OCI-LY7 (cell line): ENCODE measurements at regions of chr11 and their contacts with region 1.

Region 1: DNA sequence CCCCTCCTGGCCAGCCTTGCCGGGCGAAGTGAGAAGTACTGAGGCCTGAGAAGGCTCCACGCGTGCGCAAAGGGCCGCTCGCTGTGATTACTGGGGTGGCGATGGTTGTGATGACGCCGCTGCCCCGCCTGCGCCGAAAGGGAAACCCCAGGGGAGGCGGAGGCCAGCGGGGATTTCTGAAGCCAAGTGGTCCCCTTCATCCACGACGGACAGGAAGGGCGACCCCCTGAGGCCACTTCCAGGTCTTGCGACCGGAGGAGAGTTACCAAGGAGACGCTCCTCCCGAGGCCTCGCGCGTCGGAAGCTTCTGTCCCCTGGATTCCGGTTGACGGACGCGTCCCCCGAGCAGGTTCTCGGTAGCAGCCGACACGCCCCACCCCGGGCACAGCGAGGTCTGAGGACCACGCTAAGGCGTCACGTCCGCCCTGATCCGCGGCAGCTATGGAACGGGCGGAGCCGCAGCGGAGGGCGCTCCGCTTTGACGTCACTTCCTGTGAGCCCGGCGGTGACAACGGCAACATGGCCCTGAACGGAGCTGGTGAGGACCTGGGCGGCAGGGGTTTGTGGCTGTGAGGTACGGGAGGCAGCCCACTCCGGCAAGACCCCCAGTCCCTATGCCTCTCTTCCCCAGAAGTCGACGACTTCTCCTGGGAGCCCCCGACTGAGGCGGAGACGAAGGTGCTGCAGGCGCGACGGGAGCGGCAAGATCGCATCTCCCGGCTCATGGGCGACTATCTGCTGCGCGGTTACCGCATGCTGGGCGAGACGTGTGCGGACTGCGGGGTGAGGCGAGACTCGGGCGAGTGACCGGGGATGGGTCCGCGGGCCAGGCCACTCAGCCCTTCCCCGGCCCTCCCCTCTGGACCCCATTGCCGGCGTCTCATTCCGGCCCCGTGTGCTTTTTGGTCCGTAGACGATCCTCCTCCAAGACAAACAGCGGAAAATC is at the start of gene ZNRD2:
- DNase-seq: peak; percentile 99
- H3K4me3 ChIP-seq: peak within 1 kb of the TSS; percentile 94
- H3K27ac ChIP-seq: peak within 1 kb of the TSS; percentile 71
- H3K4me1 ChIP-seq: peaks cover 62% of the 10 kb centered on the region
- CTCF ChIP-seq: peak; percentile 69
- total RNA-seq, gene ZNRD2: 37.7 and 60.4 TPM in 2 replicates

Region 2: DNA sequence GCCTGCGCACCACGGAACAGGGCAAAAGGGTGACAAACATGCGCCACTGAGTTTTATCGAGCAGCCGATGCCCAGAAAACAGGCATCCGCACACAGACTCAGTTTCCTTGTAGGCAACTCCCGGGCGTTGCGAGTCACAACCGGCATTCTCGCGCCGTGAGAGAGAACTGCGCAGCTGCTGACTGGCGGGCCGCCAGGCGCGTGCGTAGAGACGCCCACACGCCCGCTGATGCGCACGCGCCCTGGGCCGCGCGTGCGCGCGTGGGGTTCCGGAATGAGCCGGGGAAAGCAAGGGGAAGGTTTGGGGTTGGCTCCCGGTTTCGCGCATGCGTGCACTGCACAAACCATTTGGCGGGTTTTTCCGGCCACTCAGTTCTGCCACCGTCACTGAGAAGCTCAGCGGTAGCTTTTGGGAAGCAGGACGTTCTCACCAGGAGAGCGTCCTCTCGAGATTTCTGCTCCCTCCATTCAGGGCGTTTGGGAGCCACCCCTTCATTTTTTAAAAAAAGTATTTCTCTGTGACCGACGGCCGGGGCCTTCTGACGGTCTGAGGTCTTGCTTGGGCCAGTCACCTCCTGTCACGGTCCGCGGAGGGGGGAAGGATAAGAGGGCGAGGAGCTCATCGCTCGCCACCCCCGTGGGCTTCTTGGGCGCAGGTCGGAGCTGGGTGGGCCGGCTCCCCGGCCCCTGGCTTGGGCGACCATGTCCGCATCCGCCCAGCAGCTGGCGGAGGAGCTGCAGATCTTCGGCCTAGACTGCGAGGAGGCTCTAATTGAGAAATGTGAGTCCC is 308.5 kb before region 1 on chr11 and contains the start of gene POLA2:
- CTCF ChIA-PET with region 1: no interaction called
- POLR2A ChIA-PET with region 1: no interaction called
- intact Hi-C with region 1: no loop called
- DNase-seq: peak; percentile 98
- H3K4me3 ChIP-seq: peak within 1 kb of the TSS; percentile 78
- H3K27ac ChIP-seq: peak within 1 kb of the TSS; percentile 70
- H3K4me1 ChIP-seq: peaks cover 25% of the 10 kb centered on the region
- CTCF ChIP-seq: no peak
- total RNA-seq, gene POLA2: 47.5 and 50.0 TPM in 2 replicates

Region 3: DNA sequence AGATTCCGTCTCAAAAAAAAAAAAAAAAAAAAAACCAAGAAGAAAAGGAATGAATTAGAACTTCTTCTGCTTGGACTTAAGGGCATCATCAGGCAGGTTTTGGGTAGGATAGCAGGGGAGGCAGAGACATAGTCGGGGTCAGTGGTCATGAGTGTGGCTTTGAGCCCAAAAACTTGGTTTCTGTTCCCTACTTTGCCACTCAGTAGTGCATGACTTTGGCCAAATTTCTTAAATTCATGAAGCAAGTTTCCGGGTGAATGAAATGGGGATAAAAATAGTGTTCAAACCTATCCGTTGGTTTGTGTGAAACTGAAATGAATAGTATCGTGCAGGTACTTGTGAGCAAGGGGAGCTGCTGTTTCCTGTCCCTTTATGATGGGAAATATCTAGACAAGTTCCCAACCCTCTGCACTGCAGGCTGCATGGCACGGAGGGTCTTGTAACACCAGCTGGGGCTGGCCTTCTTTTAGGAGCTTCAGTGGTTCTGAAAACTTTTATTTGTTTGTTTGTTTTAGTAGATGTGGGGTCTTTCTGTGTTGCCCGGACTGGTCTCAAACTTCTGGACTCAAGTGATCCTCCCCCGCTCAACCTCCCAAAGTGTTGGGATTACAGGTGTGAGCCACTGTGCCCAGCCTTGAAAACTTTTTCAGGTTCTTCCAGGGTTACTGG is 129.3 kb before region 1 on chr11:
- CTCF ChIA-PET with region 1: no interaction called
- POLR2A ChIA-PET with region 1: no interaction called
- intact Hi-C with region 1: no loop called
- DNase-seq: peak; percentile 91
- H3K4me3 ChIP-seq: peak overlapping the region; percentile 53
- H3K27ac ChIP-seq: peak overlapping the region; percentile 93
- H3K4me1 ChIP-seq: peaks cover 85% of the 10 kb centered on the region
- CTCF ChIP-seq: no peak

Region 4: DNA sequence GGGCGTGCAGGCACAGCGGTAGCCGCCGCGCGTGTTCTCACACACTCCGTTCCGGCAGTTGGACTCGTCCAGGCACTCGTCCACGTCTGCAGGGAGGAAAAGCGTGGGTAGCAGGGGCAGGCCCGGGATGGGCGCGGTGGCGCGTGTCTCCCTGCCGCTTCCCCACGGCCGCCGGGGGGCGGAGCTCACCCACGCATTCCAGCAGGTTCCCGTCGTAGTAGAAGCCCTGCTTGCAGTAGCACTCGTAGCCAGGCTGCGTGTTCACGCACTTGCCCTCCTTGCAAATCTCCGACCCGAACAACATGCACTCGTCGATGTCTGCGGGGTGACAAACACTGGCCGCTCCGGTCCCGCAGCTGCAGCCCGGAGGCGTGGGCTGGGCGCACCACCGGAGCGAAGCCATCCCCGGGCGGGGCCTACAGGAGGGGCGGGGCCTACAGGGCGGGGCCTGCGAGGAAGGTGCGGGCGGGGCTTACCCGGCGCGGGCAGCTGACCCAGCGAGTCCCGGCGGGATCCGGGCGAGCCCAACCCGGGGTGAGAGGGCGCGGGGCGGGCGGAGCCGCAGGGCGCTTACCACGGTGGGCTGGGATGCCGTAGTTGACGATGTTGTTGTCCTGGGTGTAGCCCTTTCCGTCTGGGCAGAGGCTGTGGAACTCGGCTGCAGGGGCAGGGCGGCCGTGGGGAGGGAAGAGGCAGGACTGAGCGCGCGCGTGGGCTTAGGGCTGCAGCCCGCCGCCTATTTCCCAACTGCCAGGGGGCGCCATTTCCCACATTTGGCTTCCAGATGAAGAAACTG is 29.8 kb before region 1 on chr11:
- CTCF ChIA-PET with region 1: interaction called, 3 read pairs
- POLR2A ChIA-PET with region 1: interaction called, 4 read pairs
- intact Hi-C with region 1: loop called (anchors 1 kb)
- DNase-seq: peak; percentile 92
- H3K4me3 ChIP-seq: peak overlapping the region; percentile 71
- H3K27ac ChIP-seq: peak overlapping the region; percentile 61
- H3K4me1 ChIP-seq: peaks cover 23% of the 10 kb centered on the region
- CTCF ChIP-seq: peak; percentile 90

Region 5: DNA sequence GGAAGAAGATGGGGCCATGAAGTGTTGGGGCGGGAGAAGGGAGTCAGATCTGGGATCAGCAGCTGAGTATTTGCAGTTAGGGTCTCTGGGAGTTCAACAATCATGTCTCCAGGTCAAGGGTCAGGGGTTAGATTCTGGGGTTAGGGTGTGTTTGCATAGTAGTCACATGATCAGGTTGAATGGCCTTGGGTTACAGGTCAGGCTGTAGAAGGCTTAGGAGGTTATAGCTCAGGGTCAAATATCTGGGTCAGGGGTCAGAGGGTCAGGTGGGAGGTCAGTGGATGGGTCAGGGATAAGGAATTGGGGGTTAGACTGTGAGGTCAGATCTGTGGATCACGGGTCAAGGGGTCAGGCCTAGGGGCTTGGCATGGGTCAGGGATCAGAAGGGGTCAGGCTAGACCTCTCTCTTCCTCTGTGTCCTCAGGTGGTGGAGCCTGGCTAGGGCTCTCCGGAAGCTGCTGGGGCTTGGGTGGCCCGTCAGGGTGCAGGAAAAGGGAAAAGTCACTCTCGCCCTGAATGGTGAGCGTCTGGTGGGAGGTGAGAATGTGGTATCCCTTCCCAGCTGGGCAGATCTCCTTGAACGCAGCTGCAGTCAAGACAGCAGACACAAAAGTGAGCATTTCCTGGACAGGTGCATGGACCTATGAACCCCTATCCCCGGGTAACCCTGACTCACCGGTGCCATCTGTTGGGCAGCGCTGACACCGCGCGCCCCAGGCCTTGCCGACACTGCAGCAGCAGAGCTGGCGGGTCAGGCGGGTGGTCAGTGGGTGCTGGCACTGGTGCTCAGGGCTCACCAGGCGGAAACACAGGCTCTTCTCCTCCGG is 18.5 kb before region 1 on chr11:
- CTCF ChIA-PET with region 1: interaction called, 3 read pairs
- POLR2A ChIA-PET with region 1: interaction called, 12 read pairs
- intact Hi-C with region 1: loop called (anchors 1 kb)
- DNase-seq: peak; percentile 91
- H3K4me3 ChIP-seq: no peak overlapping the region
- H3K27ac ChIP-seq: peak overlapping the region; percentile 56
- H3K4me1 ChIP-seq: peaks cover 51% of the 10 kb centered on the region
- CTCF ChIP-seq: peak; percentile 82

Region 6: GRCh38 chr11:65615229-65615941 is 45.1 kb after region 1 on chr11 and contains the start of gene PCNX3:
- CTCF ChIA-PET with region 1: no interaction called
- POLR2A ChIA-PET with region 1: interaction called, 4 read pairs
- intact Hi-C with region 1: loop called (anchors 1 kb)
- DNase-seq: peak; percentile 100
- H3K4me3 ChIP-seq: peak within 1 kb of the TSS; percentile 97
- H3K27ac ChIP-seq: peak within 1 kb of the TSS; percentile 75
- H3K4me1 ChIP-seq: peaks cover 48% of the 10 kb centered on the region
- CTCF ChIP-seq: no peak
- total RNA-seq, gene PCNX3: 29.9 and 36.2 TPM in 2 replicates

Region 7: GRCh38 chr11:65662799-65663638 is 92.8 kb after region 1 on chr11 and contains the start of gene RELA:
- CTCF ChIA-PET with region 1: no interaction called
- POLR2A ChIA-PET with region 1: no interaction called
- intact Hi-C with region 1: loop called (anchors 5 kb)
- DNase-seq: peak; percentile 96
- H3K4me3 ChIP-seq: peak within 1 kb of the TSS; percentile 100
- H3K27ac ChIP-seq: peak within 1 kb of the TSS; percentile 90
- H3K4me1 ChIP-seq: peaks cover 15% of the 10 kb centered on the region
- CTCF ChIP-seq: no peak
- total RNA-seq, gene RELA: 40.4 and 48.0 TPM in 2 replicates

Region 8: GRCh38 chr11:65711785-65712632 is 141.8 kb after region 1 on chr11 and contains the start of gene KAT5:
- CTCF ChIA-PET with region 1: no interaction called
- POLR2A ChIA-PET with region 1: no interaction called
- intact Hi-C with region 1: no loop called
- DNase-seq: peak; percentile 99
- H3K4me3 ChIP-seq: peak within 1 kb of the TSS; percentile 89
- H3K27ac ChIP-seq: peak within 1 kb of the TSS; percentile 82
- H3K4me1 ChIP-seq: peaks cover 19% of the 10 kb centered on the region
- CTCF ChIP-seq: peak; percentile 86
- total RNA-seq, gene KAT5: 87.9 and 97.1 TPM in 2 replicates